ENCODE measurements at regions of chr20 and their contacts with region 1.

Region 1: GRCh38 chr20:6074145-6074561 is 20.3 kb upstream of the LRRN4 start:
- DNase-seq: peak; percentile 26
- H3K4me3 ChIP-seq: no peak overlapping the region
- H3K27ac ChIP-seq: no peak overlapping the region
- H3K4me1 ChIP-seq: peaks cover 7% of the 10 kb centered on the region
- H3K27me3 ChIP-seq: no peaks in the 10 kb centered on the region
- CTCF ChIP-seq: peak; percentile 45

Region 2: DNA sequence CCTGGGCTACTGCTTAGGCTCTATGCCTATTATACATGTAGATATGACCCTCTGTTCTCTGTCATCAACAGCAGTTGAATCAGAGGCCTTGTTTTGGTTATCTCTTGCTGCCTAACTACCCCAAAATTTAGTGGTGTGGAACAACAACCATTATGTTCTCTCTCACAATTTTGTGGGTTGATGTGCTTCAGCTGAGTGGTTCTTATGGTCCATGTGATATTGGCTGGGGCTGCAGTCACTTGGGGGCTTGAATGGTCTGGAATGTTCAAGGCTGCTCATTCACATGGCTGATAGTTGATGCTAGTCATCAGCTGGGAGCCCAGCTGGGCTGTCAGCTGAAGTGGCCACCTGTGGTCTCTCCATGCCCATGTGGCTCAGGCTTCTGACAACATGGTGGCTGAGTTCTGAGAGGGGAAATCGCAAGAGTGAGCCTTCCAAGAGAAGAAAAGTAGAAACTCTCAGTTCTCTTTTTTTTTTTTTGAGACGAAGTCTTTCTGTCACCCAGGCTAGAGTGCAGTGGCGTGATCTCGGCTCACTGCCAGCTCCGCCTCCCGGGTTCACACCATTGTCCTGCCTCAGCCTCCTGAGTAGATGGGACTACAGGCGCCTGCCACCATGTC is 276.2 kb before region 1 on chr20:
- CTCF ChIA-PET with region 1: no interaction called
- POLR2A ChIA-PET with region 1: no interaction called
- intact Hi-C with region 1: loop called (anchors 10 kb)
- DNase-seq: no peak
- H3K4me3 ChIP-seq: no peak overlapping the region
- H3K27ac ChIP-seq: no peak overlapping the region
- H3K4me1 ChIP-seq: no peaks in the 10 kb centered on the region
- H3K27me3 ChIP-seq: no peaks in the 10 kb centered on the region
- CTCF ChIP-seq: no peak

Region 3: DNA sequence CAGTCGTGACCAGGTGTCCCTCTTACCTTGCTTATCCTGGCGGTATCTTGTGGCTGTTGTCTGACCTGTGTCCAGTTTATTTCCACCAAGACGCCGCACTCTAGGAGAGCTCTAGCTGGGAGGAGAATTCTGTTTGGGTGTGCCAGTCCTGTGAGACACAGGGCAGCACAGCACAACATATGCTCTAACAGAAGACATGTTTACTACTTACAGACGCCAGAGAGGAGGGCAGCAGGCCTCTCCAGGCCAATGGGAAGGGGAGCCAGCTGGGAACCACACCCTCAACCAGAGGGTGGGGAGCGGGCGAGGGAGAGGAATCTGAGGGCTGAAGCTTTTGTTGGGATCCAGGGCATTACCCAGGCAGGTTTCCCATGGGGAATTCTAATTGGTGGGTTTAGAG is 73.9 kb after region 1 on chr20:
- CTCF ChIA-PET with region 1: no interaction called
- POLR2A ChIA-PET with region 1: no interaction called
- intact Hi-C with region 1: no loop called
- DNase-seq: no peak
- H3K4me3 ChIP-seq: no peak overlapping the region
- H3K27ac ChIP-seq: no peak overlapping the region
- H3K4me1 ChIP-seq: no peaks in the 10 kb centered on the region
- H3K27me3 ChIP-seq: peaks cover 8% of the 10 kb centered on the region
- CTCF ChIP-seq: no peak

Region 4: DNA sequence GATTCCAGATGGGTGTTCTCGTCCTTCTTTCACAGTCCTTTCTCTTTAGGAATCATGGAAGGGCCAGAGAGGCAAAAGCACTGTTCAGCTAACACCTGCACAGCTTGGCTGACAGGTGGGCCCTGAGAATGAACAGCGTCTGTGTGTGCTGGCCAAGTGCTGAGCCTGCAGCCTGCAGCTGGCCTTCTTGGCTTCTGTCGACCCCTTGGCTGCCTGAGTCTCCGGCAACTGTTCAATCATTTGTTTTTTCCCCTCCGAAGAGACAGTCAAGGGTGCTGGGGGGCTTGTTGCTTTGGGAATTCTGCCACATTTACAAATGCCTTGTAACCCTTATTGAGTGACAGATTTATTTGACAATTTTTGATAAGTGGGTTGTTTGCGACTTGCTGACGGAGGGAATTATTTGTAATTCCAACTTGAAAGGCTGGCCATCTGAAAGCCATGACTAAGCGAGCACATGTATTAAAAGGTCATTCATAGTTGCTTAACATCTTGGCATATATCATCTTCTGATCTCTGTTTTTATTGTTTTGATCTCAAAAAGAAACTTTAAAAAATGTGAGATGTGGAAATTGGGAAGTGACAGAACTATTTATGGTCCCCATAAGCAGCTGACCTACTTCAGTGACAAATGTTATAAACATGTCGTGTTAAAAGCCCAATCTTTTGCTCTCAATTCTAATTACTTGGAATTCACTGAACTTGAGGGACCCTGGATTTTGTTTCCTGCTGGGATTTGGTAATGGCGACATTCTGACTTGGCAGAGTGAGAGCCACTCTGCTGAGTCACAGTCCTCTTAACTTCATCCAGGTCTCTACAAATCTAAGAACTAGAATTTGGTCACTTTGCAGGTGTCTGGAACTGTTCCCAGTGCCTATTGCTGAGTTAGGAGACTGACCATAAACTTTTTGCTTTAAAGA is 90.5 kb after region 1 on chr20:
- CTCF ChIA-PET with region 1: no interaction called
- POLR2A ChIA-PET with region 1: no interaction called
- intact Hi-C with region 1: no loop called
- DNase-seq: no peak
- H3K4me3 ChIP-seq: no peak overlapping the region
- H3K27ac ChIP-seq: no peak overlapping the region
- H3K4me1 ChIP-seq: no peaks in the 10 kb centered on the region
- H3K27me3 ChIP-seq: peaks cover 67% of the 10 kb centered on the region
- CTCF ChIP-seq: no peak

Measured in A673 (cell line).